ENCODE measurements at regions of chr9 and their contacts with region 1.

Region 1: DNA sequence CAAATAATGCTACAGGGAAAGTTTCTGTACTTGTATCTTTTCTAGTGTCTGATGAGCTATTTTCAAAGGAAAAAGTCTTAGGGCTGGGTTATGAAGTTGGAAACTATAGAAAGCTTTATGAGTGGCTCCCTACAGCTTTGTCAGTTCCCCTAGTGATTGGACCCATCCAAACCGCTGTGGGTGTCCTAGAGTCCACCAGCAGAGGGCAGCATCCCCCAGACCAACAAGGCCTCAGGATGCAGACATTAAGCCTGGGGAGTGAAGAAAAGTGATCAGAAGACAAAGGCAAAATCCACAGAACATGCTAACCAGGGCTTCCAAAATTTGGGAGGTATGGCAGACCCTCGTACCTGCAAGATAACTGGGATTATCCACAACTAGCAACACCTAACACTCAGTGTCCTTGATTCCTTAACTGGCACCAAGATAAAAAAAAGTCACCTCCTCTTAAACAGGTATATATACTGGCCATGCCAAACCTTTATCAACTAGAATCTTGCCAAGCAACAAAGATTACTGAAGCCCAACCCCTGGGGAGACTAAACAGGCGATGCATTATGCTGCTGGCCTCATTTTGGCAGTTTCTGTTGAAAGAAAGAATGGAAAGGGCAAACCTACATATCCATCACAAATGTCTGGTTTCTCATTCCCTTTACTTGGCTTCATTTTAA is 110.4 kb upstream of the NR5A1 start:
- DNase-seq: peak; percentile 34 to 52 (median 43)
- H3K4me3 ChIP-seq: no peak overlapping the region
- H3K4me3 Mint-ChIP-seq: no peak overlapping the region
- H3K27ac ChIP-seq: no peak overlapping the region
- H3K27ac Mint-ChIP-seq: no peak overlapping the region
- H3K4me1 ChIP-seq: no peaks in the 10 kb centered on the region
- H3K4me1 Mint-ChIP-seq: no peaks in the 10 kb centered on the region
- H3K27me3 ChIP-seq: no peaks in the 10 kb centered on the region
- H3K27me3 Mint-ChIP-seq: peaks cover 4 to 13% of the 10 kb centered on the region in 2 donors

Region 2: GRCh38 chr9:124684169-124684568 is 66.6 kb after region 1 on chr9:
- CTCF ChIA-PET with region 1: no interaction called
- POLR2A ChIA-PET with region 1: no interaction called
- intact Hi-C with region 1: no loop called
- DNase-seq: no peak
- H3K4me3 ChIP-seq: no peak overlapping the region
- H3K4me3 Mint-ChIP-seq: no peak overlapping the region
- H3K27ac ChIP-seq: no peak overlapping the region
- H3K27ac Mint-ChIP-seq: no peak overlapping the region
- H3K4me1 ChIP-seq: no peaks in the 10 kb centered on the region
- H3K4me1 Mint-ChIP-seq: no peaks in the 10 kb centered on the region
- H3K27me3 ChIP-seq: no peaks in the 10 kb centered on the region
- H3K27me3 Mint-ChIP-seq: peaks cover 9 to 11% of the 10 kb centered on the region in 2 donors

Region 3: GRCh38 chr9:124708633-124709291 is 91.2 kb after region 1 on chr9:
- CTCF ChIA-PET with region 1: interaction called, 34 read pairs
- POLR2A ChIA-PET with region 1: no interaction called
- intact Hi-C with region 1: loop called (anchors 1 kb)
- DNase-seq: no peak
- H3K4me3 ChIP-seq: no peak overlapping the region
- H3K4me3 Mint-ChIP-seq: no peak overlapping the region
- H3K27ac ChIP-seq: no peak overlapping the region
- H3K27ac Mint-ChIP-seq: no peak overlapping the region
- H3K4me1 ChIP-seq: no peaks in the 10 kb centered on the region
- H3K4me1 Mint-ChIP-seq: peaks cover 0 to 2% (median 0%) of the 10 kb centered on the region in 4 donors
- H3K27me3 ChIP-seq: peaks cover 4% of the 10 kb centered on the region
- H3K27me3 Mint-ChIP-seq: peaks cover 14 to 18% of the 10 kb centered on the region in 2 donors

Region 4: DNA sequence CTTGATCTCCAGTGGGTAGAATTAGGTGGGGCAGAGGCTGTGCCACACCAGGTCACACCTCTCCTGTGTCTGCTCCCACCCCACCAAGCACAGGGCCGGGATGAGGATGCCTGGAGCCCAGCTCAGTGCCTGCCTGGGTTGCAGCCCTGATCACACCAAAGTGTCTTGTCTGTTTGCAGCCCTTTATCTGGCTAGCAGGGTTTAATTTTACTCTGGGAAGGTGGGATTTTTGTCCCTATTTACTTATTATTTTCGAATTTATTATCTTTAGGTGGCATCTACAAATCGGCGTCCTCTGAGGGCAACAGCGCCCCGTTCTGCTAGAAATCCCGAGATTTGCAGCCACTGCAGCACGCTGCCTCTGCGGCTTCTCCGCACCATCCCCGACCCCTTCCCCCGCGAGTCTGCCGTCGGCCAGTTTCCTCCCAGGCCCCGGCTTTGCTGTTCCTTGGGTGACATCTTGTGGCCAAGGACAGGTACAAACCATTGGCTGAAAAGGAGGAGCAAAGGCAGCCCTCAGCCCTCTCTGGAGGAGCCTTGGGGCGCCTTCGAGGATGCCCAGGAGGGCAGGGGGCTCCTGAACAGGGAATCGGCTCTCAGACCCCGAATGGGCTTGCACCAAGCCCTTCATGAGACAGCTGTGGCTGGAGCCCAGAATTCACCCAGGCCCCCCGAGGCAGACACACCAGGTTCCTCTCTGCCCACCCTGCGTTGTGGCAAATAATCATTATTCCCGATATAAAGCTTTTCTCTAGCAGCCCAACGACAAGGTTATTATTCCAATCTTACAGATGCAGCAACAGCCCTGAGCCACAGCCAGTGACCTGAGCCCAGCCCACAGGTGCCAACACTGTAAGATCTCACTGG is 757.1 kb after region 1 on chr9:
- CTCF ChIA-PET with region 1: interaction called, 4 read pairs
- POLR2A ChIA-PET with region 1: no interaction called
- intact Hi-C with region 1: loop called (anchors 5 kb)
- DNase-seq: peak; percentile 57 to 63 (median 62)
- H3K4me3 ChIP-seq: peak overlapping the region in 1 of 2 donors; percentile 18
- H3K4me3 Mint-ChIP-seq: peak overlapping the region in 6 of 8 donors; percentile 7 to 68 (median 50)
- H3K27ac ChIP-seq: no peak overlapping the region
- H3K27ac Mint-ChIP-seq: no peak overlapping the region
- H3K4me1 ChIP-seq: peaks cover 10% of the 10 kb centered on the region
- H3K4me1 Mint-ChIP-seq: peaks cover 0 to 11% (median 6%) of the 10 kb centered on the region in 4 donors
- H3K27me3 ChIP-seq: no peaks in the 10 kb centered on the region
- H3K27me3 Mint-ChIP-seq: peaks cover 5 to 7% of the 10 kb centered on the region in 2 donors